Thyroid gland (tissue), 4 donors: ENCODE measurements at regions of chr20 and their contacts with region 1.

Region 1: DNA sequence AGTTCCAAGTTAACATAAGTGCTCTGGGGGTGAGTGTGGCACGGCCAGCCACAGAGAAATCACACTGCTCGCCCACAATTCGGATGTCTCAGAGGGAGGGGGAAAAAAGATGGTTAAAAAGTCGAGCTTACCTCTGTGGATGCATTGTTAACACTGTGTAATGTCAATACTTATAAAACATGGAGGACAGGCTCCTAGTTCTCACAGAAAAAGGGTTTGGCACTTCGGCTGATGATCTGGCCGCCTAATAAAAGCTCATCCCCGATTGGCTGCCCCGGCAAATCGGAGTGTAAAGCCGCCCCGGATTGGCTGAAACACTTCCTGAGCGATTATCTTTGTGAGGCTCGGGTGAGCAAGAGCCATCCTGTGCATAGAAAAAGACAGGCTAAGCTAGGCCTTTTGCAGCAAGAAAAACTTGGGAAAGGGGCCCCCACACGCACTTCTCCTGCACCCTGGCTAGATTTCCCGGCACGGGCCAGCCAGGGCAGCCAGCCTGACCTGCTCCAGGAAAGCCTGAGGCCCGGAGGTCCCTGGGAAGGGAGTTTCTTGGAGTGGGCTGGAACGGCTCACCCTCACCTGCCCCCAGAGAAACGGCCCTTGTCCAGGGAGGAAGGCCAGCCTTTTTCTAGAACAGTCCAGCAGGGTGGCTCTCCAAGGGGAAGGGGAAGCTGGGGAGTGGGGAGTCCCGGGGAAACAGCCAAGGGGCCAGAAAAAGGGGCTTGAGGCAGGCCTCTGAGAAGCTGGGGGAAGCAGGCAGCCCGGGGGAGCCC is at the start of gene ZMYND8:
- DNase-seq: peak; percentile 83 to 86
- H3K4me3 ChIP-seq: no peak within 1 kb of the TSS
- H3K27ac ChIP-seq: peak within 1 kb of the TSS; percentile 99 to 100 (median 100)
- H3K4me1 ChIP-seq: peaks cover 97 to 100% of the 10 kb centered on the region in 2 donors
- H3K27me3 ChIP-seq: no peaks in the 10 kb centered on the region
- CTCF ChIP-seq: no peak
- POLR2A ChIP-seq: peak in 1 of 2 donors; percentile 63
- total RNA-seq, gene ZMYND8: 29.7 to 42.4 (median 30.9) TPM

Region 2: GRCh38 chr20:47231382-47232039 is 125.2 kb before region 1 on chr20:
- intact Hi-C with region 1: no loop called
- DNase-seq: no peak
- H3K4me3 ChIP-seq: no peak overlapping the region
- H3K27ac ChIP-seq: no peak overlapping the region
- H3K4me1 ChIP-seq: peaks cover 0 to 2% of the 10 kb centered on the region in 2 donors
- H3K27me3 ChIP-seq: no peaks in the 10 kb centered on the region
- CTCF ChIP-seq: no peak
- POLR2A ChIP-seq: no peak

Region 3: DNA sequence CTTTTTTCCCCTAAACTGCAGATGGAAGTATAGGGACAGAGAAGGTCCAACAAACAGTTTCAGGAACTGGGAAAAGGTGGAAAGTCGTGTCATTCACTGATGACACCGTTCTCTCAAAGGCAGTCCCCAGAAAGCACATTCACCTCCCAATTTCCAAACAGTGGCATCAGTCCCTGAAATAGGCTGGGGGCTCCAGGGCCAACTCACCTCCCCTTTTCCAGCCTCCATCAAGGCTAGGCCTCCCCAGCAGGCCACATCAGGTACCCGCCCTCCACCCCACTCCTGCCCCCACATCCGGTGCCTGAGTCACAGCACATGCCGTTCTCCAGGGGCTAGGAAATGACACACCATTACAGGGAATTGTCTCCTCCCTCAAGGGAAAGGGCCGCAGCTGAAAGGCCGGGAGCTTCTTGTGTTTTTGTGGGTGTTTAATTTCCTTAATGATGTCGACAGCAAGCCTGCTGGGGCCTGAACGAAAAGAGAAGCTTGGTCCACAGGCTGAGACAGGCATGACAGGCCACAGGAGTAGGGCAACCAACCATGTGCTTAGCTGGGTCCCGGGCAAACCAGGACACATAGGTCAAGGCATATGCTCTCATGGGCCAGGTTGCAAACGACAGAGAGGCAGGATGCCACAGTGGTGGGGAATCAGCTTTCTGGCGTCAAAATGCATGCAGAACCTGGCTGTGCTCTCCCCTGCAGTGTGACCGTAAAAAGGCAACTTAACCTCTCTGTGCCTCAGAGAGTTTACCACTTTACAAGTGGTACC is 39.4 kb before region 1 on chr20:
- intact Hi-C with region 1: loop called (anchors 5 kb)
- DNase-seq: peak; percentile 74 to 81
- H3K4me3 ChIP-seq: no peak overlapping the region
- H3K27ac ChIP-seq: peak overlapping the region; percentile 99 to 100 (median 100)
- H3K4me1 ChIP-seq: peaks cover 75 to 100% of the 10 kb centered on the region in 2 donors
- H3K27me3 ChIP-seq: no peaks in the 10 kb centered on the region
- CTCF ChIP-seq: peak in 2 of 6 experiments; percentile 11 to 15
- POLR2A ChIP-seq: peak in 1 of 2 donors; percentile 49